IMR-90 (cell line): ENCODE measurements at regions of chr4 and their contacts with region 1.

Region 1: GRCh38 chr4:151362404-151363164 is 37.2 kb upstream of the SH3D19 start:
- DNase-seq: peak; percentile 80
- ATAC-seq: peak; percentile 100
- H3K4me3 ChIP-seq: no peak overlapping the region
- H3K27ac ChIP-seq: no peak overlapping the region
- H3K4me1 ChIP-seq: no peaks in the 10 kb centered on the region
- H3K27me3 ChIP-seq: peaks cover 3% of the 10 kb centered on the region; the same call in 1 of the 2 replicates
- CTCF ChIP-seq: peak; percentile 98
- POLR2A ChIP-seq: peak; percentile 44
- RAD21 ChIP-seq: peak; percentile 99

Region 2: DNA sequence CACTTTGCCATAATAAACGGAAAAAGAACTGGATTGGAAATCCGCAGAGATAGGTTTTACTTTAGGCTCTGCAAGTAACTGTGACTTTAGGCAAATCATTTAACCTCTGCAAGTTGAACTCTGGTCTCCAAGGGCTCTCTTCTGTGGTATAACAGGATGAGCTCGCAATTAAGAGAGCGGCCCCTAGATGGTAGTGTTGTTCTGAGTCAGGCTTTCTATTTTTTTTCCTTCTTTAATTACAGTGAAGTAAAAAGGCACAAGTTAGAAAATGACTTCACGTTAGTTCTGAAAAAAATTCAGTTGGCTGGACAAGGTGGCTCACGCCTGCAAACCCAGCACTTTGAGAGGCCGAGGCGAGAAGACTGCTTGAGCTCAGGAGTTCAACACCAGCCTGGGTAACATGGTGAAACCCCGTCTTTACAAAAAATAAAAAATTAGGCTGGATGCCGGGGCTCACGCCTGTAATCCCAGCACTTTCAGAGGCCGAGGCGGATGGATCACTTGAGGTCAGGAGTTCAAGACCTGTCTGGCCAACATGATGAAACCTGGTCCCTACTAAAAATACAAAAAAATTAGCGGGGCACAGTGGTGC is 245.1 kb before region 1 on chr4:
- CTCF ChIA-PET with region 1: no interaction called
- POLR2A ChIA-PET with region 1: no interaction called
- dilution Hi-C with region 1: no loop called
- in situ Hi-C with region 1: loop called (anchors 10 kb)
- intact Hi-C with region 1: loop called (anchors 1 kb)
- DNase-seq: peak; percentile 69
- ATAC-seq: peak; percentile 89
- H3K4me3 ChIP-seq: no peak overlapping the region
- H3K27ac ChIP-seq: no peak overlapping the region
- H3K4me1 ChIP-seq: peaks cover 6% of the 10 kb centered on the region
- H3K27me3 ChIP-seq: no peaks in the 10 kb centered on the region
- CTCF ChIP-seq: peak; percentile 87
- POLR2A ChIP-seq: no peak
- RAD21 ChIP-seq: peak; percentile 84

Region 3: DNA sequence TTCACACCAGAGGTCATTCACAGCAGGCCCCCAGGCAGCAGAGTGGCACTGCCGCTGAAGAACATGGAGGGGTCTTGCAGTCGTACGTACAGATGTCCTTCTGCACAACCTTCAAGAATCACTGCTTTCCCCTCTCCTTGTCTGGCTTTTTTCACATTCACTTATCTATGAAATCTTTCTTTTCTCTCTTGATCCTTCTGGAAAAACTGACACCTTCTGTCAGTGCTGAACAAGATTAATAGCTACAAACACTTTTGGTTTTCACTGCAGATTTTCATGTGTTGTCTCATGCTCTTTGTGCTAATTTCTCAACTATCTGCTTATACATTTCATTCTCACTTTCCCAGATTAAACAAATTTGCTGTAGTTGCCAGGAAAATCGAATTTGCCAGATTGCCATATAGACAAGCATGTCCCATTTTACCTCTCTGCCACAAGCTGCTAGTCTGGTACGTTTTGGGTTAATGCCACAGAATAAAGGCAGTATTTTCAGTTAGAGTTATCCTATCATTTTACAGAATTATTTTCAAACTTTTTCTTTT is 180.1 kb before region 1 on chr4:
- CTCF ChIA-PET with region 1: no interaction called
- POLR2A ChIA-PET with region 1: interaction called, 11 read pairs
- dilution Hi-C with region 1: no loop called
- in situ Hi-C with region 1: no loop called
- intact Hi-C with region 1: no loop called
- DNase-seq: no peak
- ATAC-seq: no peak
- H3K4me3 ChIP-seq: no peak overlapping the region
- H3K27ac ChIP-seq: no peak overlapping the region
- H3K4me1 ChIP-seq: peaks cover 1% of the 10 kb centered on the region; the same call in 1 of the 2 replicates
- H3K27me3 ChIP-seq: no peaks in the 10 kb centered on the region
- CTCF ChIP-seq: no peak
- POLR2A ChIP-seq: no peak
- RAD21 ChIP-seq: no peak

Region 4: GRCh38 chr4:151276787-151277562 is 85.6 kb before region 1 on chr4 and contains the start of gene PRSS48:
- CTCF ChIA-PET with region 1: interaction called, 5 read pairs
- POLR2A ChIA-PET with region 1: no interaction called
- dilution Hi-C with region 1: no loop called
- in situ Hi-C with region 1: no loop called
- intact Hi-C with region 1: loop called (anchors 1 kb)
- DNase-seq: peak; percentile 32
- ATAC-seq: peak; percentile 81
- H3K4me3 ChIP-seq: no peak within 1 kb of the TSS
- H3K27ac ChIP-seq: no peak within 1 kb of the TSS
- H3K4me1 ChIP-seq: 0 out of 2 replicates have a peak, but pooled peaks cover 1% of the 10 kb centered on the region
- H3K27me3 ChIP-seq: no peaks in the 10 kb centered on the region
- CTCF ChIP-seq: peak; percentile 70
- POLR2A ChIP-seq: no peak
- RAD21 ChIP-seq: peak; percentile 75
- total RNA-seq, gene PRSS48: not detected in 2 replicates

Region 5: DNA sequence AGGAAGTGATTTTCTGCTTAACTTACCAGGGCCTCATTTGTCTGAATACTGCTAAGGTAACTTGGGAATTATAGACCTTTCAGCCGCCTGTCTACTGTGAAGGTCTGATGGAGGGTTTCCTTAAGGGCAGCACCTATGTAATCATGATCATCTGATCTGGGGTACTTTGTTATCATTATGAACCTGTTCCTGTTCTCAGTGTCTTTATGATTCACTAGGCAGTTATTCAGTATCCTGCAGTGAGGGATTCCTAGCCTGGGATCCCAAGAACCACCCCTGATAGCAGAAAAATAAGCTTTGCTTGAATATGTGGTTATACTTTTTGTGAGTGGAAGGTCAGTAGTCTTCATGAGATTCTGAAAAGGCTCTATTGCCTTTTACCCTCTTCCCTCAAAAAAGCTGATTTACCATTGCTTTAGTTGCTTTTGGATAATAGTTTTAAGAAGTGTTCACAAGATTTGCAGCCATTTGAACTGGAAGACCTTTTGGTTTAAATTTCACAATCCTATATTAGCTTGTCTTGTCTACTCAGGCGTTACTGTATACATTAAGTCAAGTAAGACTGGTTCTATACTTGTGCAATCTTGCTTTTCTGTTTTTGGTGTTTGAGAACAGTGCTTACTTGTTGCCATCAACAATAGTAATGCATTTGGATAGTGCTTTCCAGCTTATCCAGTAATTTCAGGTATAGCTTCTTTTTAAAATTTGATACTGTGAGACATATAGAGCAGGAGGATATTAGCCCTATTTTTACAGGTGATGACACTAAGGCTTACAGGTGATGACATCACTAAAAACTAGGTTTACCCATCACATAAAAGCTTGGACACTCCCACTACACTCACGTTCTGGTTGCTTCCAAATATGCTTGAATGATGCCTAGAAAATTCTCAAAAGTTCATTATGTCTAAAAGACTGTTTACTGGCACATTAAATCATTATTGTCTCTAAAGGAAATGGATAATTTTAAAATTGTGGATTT is 106.4 kb after region 1 on chr4:
- CTCF ChIA-PET with region 1: no interaction called
- POLR2A ChIA-PET with region 1: no interaction called
- dilution Hi-C with region 1: no loop called
- in situ Hi-C with region 1: no loop called
- intact Hi-C with region 1: no loop called
- DNase-seq: no peak
- ATAC-seq: no peak
- H3K4me3 ChIP-seq: no peak overlapping the region
- H3K27ac ChIP-seq: no peak overlapping the region
- H3K4me1 ChIP-seq: no peaks in the 10 kb centered on the region
- H3K27me3 ChIP-seq: peaks cover 7% of the 10 kb centered on the region; the same call in 1 of the 2 replicates
- CTCF ChIP-seq: no peak
- POLR2A ChIP-seq: no peak
- RAD21 ChIP-seq: no peak

Region 6: GRCh38 chr4:151604238-151604637 is 241.7 kb after region 1 on chr4:
- CTCF ChIA-PET with region 1: interaction called, 5 read pairs
- POLR2A ChIA-PET with region 1: no interaction called
- dilution Hi-C with region 1: no loop called
- in situ Hi-C with region 1: loop called (anchors 10 kb)
- intact Hi-C with region 1: loop called (anchors 1 kb)
- DNase-seq: peak; percentile 32
- ATAC-seq: peak; percentile 72
- H3K4me3 ChIP-seq: no peak overlapping the region
- H3K27ac ChIP-seq: no peak overlapping the region
- H3K4me1 ChIP-seq: peaks cover 3% of the 10 kb centered on the region; the same call in 1 of the 2 replicates
- H3K27me3 ChIP-seq: peaks cover 6% of the 10 kb centered on the region
- CTCF ChIP-seq: peak; percentile 57
- POLR2A ChIP-seq: no peak
- RAD21 ChIP-seq: peak; percentile 54

Region 7: GRCh38 chr4:152369902-152370295 is 1007.3 kb after region 1 on chr4:
- CTCF ChIA-PET with region 1: no interaction called
- POLR2A ChIA-PET with region 1: no interaction called
- dilution Hi-C with region 1: no loop called
- in situ Hi-C with region 1: no loop called
- intact Hi-C with region 1: loop called (anchors 5 kb)
- DNase-seq: peak; percentile 24
- ATAC-seq: 0 out of 2 replicates have a peak, but pooled peaks have one; percentile 56
- H3K4me3 ChIP-seq: no peak overlapping the region
- H3K27ac ChIP-seq: no peak overlapping the region
- H3K4me1 ChIP-seq: peaks cover 3% of the 10 kb centered on the region; the same call in 1 of the 2 replicates
- H3K27me3 ChIP-seq: no peaks in the 10 kb centered on the region
- CTCF ChIP-seq: peak; percentile 50
- POLR2A ChIP-seq: no peak
- RAD21 ChIP-seq: peak; percentile 51